ENCODE measurements at regions of chr1 and their contacts with region 1.

Region 1: DNA sequence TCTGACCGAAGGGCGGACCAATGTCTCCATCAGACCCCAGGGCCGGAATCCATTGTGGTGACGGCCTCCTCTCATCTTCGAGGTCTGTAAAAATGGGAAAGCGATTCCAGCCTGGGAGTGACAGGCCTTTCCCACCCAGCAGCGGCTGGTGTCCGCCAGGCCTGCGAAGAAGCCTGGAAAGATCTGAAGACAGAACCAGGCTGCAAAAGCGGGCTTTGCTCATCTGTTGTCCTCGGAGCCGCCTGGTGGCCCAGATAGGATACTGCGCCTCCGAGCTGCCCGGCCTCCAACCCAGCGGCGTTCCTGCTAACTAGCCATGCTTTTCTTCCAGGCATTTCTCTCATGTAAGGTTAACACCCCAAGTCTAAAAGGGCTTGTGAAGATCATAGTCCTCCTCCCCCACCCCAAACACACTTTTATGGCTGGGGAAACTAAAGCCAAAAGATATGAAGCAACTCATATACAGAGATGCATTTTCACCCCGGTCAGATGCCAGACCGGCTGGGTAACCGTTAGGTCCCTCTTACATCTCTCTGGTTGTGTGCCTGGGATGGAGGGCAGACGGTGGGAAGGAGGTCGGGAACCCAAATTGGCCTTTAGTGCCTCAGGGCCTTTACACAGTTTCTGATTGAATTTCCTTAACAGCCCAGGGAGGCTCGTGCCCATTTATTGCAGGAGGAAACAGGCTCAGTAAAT is 1.9 kb upstream of the DHRS3 start:
- DNase-seq: peak; percentile 73
- H3K4me3 ChIP-seq: peak overlapping the region; percentile 6 to 87 (median 49)
- H3K27ac ChIP-seq: peak overlapping the region; percentile 89
- H3K4me1 ChIP-seq: peaks cover 22% of the 10 kb centered on the region
- H3K27me3 ChIP-seq: no peaks in the 10 kb centered on the region
- CTCF ChIP-seq: peak; percentile 98

Region 2: DNA sequence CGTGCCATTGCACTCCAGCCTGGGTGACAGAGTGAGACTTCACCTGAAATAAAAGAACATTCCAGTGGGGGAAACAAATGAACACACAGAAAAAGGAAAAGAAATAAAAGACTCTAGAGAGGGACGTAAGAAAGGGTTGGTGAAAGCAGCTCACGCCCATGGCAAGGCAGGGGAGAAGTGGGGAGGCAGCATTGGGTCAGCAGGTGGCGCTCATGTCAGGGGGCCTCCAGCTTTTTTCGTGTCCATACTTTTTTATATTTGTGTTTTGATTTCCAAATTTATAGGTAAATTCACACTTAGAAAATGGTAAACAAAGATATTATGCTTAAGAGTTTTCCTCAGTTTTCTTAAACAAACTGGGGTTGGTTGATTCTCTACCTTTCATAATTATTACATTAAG is 344.6 kb before region 1 on chr1:
- CTCF ChIA-PET with region 1: no interaction called
- dilution Hi-C with region 1: no loop called
- in situ Hi-C with region 1: loop called in 1 of 2 experiments (anchors 25 kb)
- intact Hi-C with region 1: loop called (anchors 1 kb)
- DNase-seq: no peak
- H3K4me3 ChIP-seq: no peak overlapping the region
- H3K27ac ChIP-seq: no peak overlapping the region
- H3K4me1 ChIP-seq: no peaks in the 10 kb centered on the region
- H3K27me3 ChIP-seq: no peaks in the 10 kb centered on the region
- CTCF ChIP-seq: peak; percentile 66 to 71

Region 3: GRCh38 chr1:12386130-12386529 is 233.8 kb before region 1 on chr1:
- CTCF ChIA-PET with region 1: no interaction called
- dilution Hi-C with region 1: no loop called
- in situ Hi-C with region 1: loop called in 1 of 2 experiments (anchors 5 kb)
- intact Hi-C with region 1: loop called (anchors 1 kb)
- DNase-seq: peak; percentile 84
- H3K4me3 ChIP-seq: no peak overlapping the region
- H3K27ac ChIP-seq: peak overlapping the region; percentile 63
- H3K4me1 ChIP-seq: peaks cover 33% of the 10 kb centered on the region
- H3K27me3 ChIP-seq: no peaks in the 10 kb centered on the region
- CTCF ChIP-seq: no peak

Region 4: DNA sequence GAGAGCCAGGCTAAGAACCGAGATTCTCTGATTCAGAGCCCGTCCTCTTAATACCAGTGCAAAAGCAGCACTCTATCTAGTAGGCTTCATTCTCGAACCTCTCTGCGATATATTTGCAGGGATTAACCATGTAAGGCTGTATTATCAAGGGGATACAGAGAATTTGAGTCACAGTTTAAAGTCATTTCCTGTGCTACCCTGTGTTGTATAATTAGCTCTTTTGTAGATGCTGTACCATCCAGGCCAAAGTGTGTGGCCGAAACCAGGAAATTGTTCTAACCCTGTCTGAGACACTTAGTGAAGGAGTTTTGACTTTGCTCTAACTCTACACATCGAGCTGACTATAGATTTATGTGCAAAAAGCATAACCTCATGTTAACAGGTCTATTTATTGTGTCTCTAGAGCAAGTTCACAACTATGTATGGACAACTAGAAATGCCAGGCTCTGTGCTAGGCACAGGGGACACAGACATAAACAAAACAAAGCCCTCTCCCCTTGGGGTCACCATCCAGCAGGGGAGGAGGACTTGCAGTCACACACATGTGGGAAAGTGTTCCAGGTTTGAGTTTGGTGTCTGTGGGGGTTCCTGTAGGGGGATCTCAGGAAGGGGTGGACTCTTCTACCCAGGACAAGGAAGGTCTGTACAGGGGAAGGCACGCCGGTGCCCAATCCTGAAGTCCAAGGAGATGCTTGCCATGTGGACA is 184.1 kb before region 1 on chr1:
- CTCF ChIA-PET with region 1: no interaction called
- dilution Hi-C with region 1: no loop called
- in situ Hi-C with region 1: no loop called
- intact Hi-C with region 1: loop called (anchors 1 kb)
- DNase-seq: no peak
- H3K4me3 ChIP-seq: no peak overlapping the region
- H3K27ac ChIP-seq: no peak overlapping the region
- H3K4me1 ChIP-seq: peaks cover 62% of the 10 kb centered on the region
- H3K27me3 ChIP-seq: no peaks in the 10 kb centered on the region
- CTCF ChIP-seq: no peak

Region 5: GRCh38 chr1:12572506-12572905 is 47.4 kb before region 1 on chr1:
- CTCF ChIA-PET with region 1: no interaction called
- dilution Hi-C with region 1: no loop called
- in situ Hi-C with region 1: no loop called
- intact Hi-C with region 1: loop called (anchors 2 kb)
- DNase-seq: peak; percentile 36
- H3K4me3 ChIP-seq: no peak overlapping the region
- H3K27ac ChIP-seq: no peak overlapping the region
- H3K4me1 ChIP-seq: peaks cover 19% of the 10 kb centered on the region
- H3K27me3 ChIP-seq: no peaks in the 10 kb centered on the region
- CTCF ChIP-seq: no peak

Region 6: GRCh38 chr1:12697397-12697796 is 77.5 kb after region 1 on chr1:
- CTCF ChIA-PET with region 1: no interaction called
- dilution Hi-C with region 1: no loop called
- in situ Hi-C with region 1: no loop called
- intact Hi-C with region 1: no loop called
- DNase-seq: no peak
- H3K4me3 ChIP-seq: no peak overlapping the region
- H3K27ac ChIP-seq: no peak overlapping the region
- H3K4me1 ChIP-seq: no peaks in the 10 kb centered on the region
- H3K27me3 ChIP-seq: no peaks in the 10 kb centered on the region
- CTCF ChIP-seq: no peak

Region 7: GRCh38 chr1:13836136-13836535 is 1216.2 kb after region 1 on chr1:
- CTCF ChIA-PET with region 1: no interaction called
- dilution Hi-C with region 1: no loop called
- in situ Hi-C with region 1: no loop called
- intact Hi-C with region 1: no loop called
- DNase-seq: no peak
- H3K4me3 ChIP-seq: no peak overlapping the region
- H3K27ac ChIP-seq: no peak overlapping the region
- H3K4me1 ChIP-seq: no peaks in the 10 kb centered on the region
- H3K27me3 ChIP-seq: no peaks in the 10 kb centered on the region
- CTCF ChIP-seq: no peak